ENCODE measurements at regions of chr11 and their contacts with region 1.

Region 1: GRCh38 chr11:17978553-17979287 is 34.1 kb downstream of the SERGEF start:
- DNase-seq: peak; percentile 42
- H3K4me3 ChIP-seq: no peak overlapping the region
- H3K27ac ChIP-seq: no peak overlapping the region
- H3K4me1 ChIP-seq: peaks cover 0 to 4% (median 0%) of the 10 kb centered on the region in 4 donors
- H3K27me3 ChIP-seq: no peaks in the 10 kb centered on the region
- CTCF ChIP-seq: peak; percentile 38 to 63 (median 59)
- EP300 ChIP-seq: no peak
- POLR2A ChIP-seq: no peak

Region 2: GRCh38 chr11:17598700-17599459 is 379.8 kb before region 1 on chr11:
- in situ Hi-C with region 1: loop called in 1 of 4 experiments (anchors 10 kb)
- intact Hi-C with region 1: loop called (anchors 5 kb)
- DNase-seq: peak; percentile 67
- H3K4me3 ChIP-seq: no peak overlapping the region
- H3K27ac ChIP-seq: no peak overlapping the region
- H3K4me1 ChIP-seq: no peaks in the 10 kb centered on the region
- H3K27me3 ChIP-seq: peaks cover 4% of the 10 kb centered on the region
- CTCF ChIP-seq: peak; percentile 76 to 91 (median 86)
- EP300 ChIP-seq: no peak
- POLR2A ChIP-seq: no peak

Region 3: GRCh38 chr11:17722000-17722643 is 256.6 kb before region 1 on chr11:
- in situ Hi-C with region 1: loop called in 1 of 4 experiments (anchors 10 kb)
- intact Hi-C with region 1: no loop called
- DNase-seq: no peak
- H3K4me3 ChIP-seq: no peak overlapping the region
- H3K27ac ChIP-seq: no peak overlapping the region
- H3K4me1 ChIP-seq: peaks cover 0 to 8% (median 0%) of the 10 kb centered on the region in 4 donors
- H3K27me3 ChIP-seq: peaks cover 84% of the 10 kb centered on the region
- CTCF ChIP-seq: no peak
- EP300 ChIP-seq: no peak
- POLR2A ChIP-seq: no peak

Region 4: DNA sequence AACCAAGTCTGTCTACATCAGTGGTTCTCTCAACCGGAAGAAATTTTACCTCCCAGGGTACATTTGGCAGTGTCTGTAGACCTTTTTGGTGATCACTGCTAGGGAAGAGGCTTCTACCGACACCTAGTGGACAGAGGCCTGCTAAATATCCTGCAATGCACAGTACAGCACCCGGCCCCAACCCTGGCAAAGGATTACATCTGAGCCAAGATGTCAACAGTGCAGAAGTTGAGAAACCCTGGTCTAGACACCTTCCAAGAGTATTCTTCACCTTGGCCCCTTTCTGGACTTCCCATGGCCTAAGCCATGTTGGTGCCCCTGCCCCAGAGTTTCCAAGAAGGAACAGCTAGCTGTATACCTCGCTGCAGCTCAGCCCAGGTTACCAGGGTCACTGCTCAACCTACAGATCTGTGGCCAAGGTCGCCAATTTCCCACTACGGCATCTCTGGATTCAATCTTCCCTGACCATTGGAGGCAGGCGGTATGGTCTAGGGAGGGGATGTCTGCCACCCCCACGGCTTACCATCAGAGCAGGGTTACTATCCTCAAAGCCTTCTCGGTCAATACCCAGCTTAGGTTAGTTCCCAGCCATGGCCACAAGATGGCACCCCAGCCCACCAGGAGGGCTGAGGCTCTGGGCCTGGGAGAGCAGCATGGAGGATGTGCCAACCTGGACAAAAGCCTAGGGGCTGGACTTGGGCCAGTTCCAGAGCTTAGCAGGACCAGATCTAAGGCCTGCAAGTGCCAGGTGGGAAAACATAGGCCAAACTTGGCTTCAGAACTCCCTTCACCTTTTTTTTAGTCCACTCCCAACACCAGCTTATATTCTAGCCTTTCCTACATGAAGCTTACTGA is 247.9 kb before region 1 on chr11:
- in situ Hi-C with region 1: loop called in 1 of 4 experiments (anchors 10 kb)
- intact Hi-C with region 1: loop called (anchors 5 kb)
- DNase-seq: peak; percentile 71
- H3K4me3 ChIP-seq: no peak overlapping the region
- H3K27ac ChIP-seq: no peak overlapping the region
- H3K4me1 ChIP-seq: peaks cover 0 to 15% (median 14%) of the 10 kb centered on the region in 4 donors
- H3K27me3 ChIP-seq: peaks cover 53% of the 10 kb centered on the region
- CTCF ChIP-seq: peak; percentile 64 to 81 (median 71)
- EP300 ChIP-seq: no peak
- POLR2A ChIP-seq: no peak

Region 5: DNA sequence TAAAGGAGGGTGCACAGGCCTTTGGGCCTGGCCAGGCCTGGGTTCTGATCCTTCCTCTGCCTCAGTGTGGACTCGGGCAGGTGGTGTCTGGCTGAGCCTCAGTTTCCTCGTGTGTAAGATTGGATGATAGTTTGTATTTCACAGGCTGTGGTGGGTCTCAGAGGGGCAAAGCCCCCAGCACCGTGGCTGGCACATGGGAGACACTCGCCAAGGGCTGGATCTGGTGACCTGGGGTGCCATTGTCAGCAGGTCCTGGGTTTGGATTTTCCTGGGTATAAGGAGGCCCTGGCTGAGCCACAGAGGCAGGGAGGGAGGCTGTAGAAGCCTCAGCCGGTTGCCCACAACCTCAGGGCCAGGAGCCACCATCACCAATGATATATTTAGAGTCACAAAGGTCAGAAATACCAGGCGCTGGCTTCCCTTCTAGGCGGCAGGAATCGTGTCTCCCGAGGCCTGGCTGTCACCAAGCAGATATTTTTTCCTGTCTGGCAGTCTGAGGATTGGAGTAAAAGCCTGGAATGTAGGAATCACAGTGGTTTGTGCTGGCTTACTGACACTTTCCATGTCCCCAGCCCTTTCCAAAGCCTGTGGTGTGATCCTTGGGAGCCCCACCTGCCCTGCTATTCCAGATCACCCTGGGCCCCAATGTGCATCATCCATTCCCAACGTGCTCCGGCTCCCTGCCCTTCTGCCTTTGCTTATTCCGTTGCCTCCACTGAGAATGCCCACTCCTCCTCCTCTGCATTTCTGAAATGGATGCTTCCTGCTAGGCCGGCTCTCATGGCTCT is 228.5 kb before region 1 on chr11:
- in situ Hi-C with region 1: loop called (anchors 10 kb)
- intact Hi-C with region 1: no loop called
- DNase-seq: no peak
- H3K4me3 ChIP-seq: no peak overlapping the region
- H3K27ac ChIP-seq: no peak overlapping the region
- H3K4me1 ChIP-seq: no peaks in the 10 kb centered on the region
- H3K27me3 ChIP-seq: no peaks in the 10 kb centered on the region
- CTCF ChIP-seq: no peak
- EP300 ChIP-seq: no peak
- POLR2A ChIP-seq: no peak

Region 6: GRCh38 chr11:18115360-18116127 is 136.8 kb after region 1 on chr11:
- in situ Hi-C with region 1: no loop called
- intact Hi-C with region 1: no loop called
- DNase-seq: peak; percentile 58
- H3K4me3 ChIP-seq: no peak overlapping the region
- H3K27ac ChIP-seq: no peak overlapping the region
- H3K4me1 ChIP-seq: no peaks in the 10 kb centered on the region
- H3K27me3 ChIP-seq: peaks cover 38% of the 10 kb centered on the region
- CTCF ChIP-seq: peak; percentile 73 to 91 (median 82)
- EP300 ChIP-seq: no peak
- POLR2A ChIP-seq: no peak